Activated CD4-positive, alpha-beta T cell treated with anti-CD3 and anti-CD28 coated beads for 36 hours (primary cell): ENCODE measurements at regions of chrX and their contacts with region 1.

Region 1: DNA sequence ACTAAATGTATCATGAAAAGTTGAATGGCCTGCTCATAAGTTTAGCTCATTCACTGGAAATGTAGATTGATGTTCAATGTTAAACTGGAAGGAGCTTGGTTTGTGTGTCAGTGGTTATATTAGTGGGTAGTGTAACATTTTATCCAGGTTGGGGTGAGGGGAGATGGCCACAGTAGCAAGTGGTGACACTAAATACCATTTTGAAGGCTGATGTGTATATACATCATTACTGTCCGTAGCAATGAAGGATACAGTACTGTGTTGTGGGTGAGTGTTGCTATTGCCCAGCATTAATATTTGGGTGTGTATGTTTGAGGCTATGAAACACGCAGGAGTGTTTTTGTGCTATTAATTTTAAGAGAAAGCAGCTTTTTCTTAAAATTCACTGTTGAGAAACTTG is 6.3 kb downstream of the HMGB3 start:
- DNase-seq: no peak
- ATAC-seq: no peak
- H3K4me3 Mint-ChIP-seq: no peak overlapping the region
- H3K27ac Mint-ChIP-seq: no peak overlapping the region
- H3K4me1 Mint-ChIP-seq: peaks cover 4% of the 10 kb centered on the region
- H3K27me3 Mint-ChIP-seq: peaks cover 10% of the 10 kb centered on the region

Region 2: DNA sequence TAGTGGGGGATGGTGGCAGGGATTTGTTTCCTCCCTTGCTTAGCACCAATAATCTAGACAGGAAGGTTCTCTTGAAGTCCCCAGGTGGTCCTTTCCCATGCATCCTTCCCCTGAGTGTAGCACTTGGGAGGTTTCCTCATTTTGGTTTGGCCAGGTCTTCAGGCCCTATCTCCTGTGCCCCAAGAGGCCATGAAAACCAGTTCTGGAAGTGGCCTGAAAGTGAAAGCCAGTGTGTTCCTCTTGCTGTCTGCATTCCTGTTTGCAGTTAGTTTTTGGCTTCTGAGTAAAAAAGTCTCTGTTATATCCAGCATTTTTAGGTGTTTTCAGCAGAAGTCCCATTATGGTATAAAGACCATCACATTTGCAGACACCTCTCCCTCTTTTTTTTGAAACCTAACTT is 361.5 kb before region 1 on chrX:
- CTCF ChIA-PET with region 1: no interaction called
- POLR2A ChIA-PET with region 1: no interaction called
- intact Hi-C with region 1: no loop called
- DNase-seq: no peak
- ATAC-seq: no peak
- H3K4me3 Mint-ChIP-seq: no peak overlapping the region
- H3K27ac Mint-ChIP-seq: no peak overlapping the region
- H3K4me1 Mint-ChIP-seq: peaks cover 3% of the 10 kb centered on the region
- H3K27me3 Mint-ChIP-seq: no peaks in the 10 kb centered on the region

Region 3: GRCh38 chrX:151004082-151004481 is 14.7 kb after region 1 on chrX:
- CTCF ChIA-PET with region 1: no interaction called
- POLR2A ChIA-PET with region 1: no interaction called
- intact Hi-C with region 1: no loop called
- DNase-seq: no peak
- ATAC-seq: no peak
- H3K4me3 Mint-ChIP-seq: no peak overlapping the region
- H3K27ac Mint-ChIP-seq: no peak overlapping the region
- H3K4me1 Mint-ChIP-seq: no peaks in the 10 kb centered on the region
- H3K27me3 Mint-ChIP-seq: peaks cover 3% of the 10 kb centered on the region

Region 4: DNA sequence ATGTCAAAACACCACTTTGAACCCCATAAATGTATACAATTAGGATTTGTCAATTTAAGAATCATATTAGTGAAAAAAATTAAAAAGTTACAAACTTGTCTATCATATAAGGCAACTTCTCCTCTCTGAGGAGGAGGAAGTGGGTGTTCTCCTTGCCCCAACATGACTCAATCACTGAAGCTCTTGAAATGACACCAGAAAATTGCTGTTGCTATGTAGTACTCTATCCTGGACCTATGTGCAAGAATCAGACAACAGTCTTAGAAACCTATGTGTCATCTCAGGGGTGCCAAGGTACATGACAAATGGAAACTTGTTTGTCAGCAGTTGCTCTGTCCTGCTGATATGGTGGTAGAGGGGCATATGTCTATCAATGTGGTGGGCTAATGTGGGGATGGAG is 41.4 kb after region 1 on chrX:
- CTCF ChIA-PET with region 1: no interaction called
- POLR2A ChIA-PET with region 1: no interaction called
- intact Hi-C with region 1: loop called in 1 of 2 experiments (anchors 5 kb)
- DNase-seq: peak; percentile 6
- ATAC-seq: peak; percentile 96
- H3K4me3 Mint-ChIP-seq: no peak overlapping the region
- H3K27ac Mint-ChIP-seq: peak overlapping the region; percentile 85
- H3K4me1 Mint-ChIP-seq: peaks cover 14% of the 10 kb centered on the region
- H3K27me3 Mint-ChIP-seq: peaks cover 6% of the 10 kb centered on the region